Activated CD4-positive, alpha-beta memory T cell treated with anti-CD3 and anti-CD28 coated beads for 36 hours (primary cell): ENCODE measurements at regions of chr11 and their contacts with region 1.

Region 1: DNA sequence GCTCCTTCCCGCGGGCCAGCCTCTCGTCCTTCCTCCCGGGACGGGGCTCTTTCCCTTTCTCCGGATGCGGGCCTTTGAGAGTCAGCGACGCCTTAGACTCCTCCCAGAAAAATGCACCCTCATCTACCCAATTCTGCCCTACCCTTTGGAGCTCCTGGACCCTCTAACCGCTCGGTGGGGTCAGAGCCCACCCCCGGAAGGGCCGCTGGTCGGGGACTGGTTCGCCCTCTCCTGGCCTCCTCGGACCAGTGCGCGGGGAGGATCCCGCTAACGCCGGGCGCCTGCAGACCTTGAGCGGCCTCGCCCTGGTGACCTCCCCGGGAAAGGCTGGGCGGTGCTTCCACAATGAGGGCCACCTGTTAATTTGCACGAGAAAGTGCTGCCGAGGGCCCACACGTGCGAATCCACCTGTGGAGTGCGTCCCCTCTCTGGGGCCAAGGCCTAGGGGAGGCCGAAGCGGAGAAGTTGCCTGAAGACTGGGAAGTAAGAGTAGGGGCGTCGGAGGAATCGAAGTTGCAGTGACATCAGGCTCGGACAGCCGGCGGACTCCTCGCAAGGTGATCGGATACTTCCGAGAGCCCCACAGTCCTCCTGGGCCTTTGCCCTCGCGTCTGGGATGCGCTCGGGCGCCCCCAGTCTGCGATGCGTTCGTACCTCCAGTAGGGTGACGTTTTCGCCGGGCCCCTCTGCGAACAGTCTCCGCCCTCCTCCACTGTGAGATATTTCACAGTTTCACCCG is 61.5 kb downstream of the ENDOD1 start:
- DNase-seq: peak; percentile 95
- H3K4me3 Mint-ChIP-seq: peak overlapping the region; percentile 81
- H3K27ac Mint-ChIP-seq: peak overlapping the region; percentile 88
- H3K4me1 Mint-ChIP-seq: peaks cover 36% of the 10 kb centered on the region
- H3K27me3 Mint-ChIP-seq: no peaks in the 10 kb centered on the region

Region 2: DNA sequence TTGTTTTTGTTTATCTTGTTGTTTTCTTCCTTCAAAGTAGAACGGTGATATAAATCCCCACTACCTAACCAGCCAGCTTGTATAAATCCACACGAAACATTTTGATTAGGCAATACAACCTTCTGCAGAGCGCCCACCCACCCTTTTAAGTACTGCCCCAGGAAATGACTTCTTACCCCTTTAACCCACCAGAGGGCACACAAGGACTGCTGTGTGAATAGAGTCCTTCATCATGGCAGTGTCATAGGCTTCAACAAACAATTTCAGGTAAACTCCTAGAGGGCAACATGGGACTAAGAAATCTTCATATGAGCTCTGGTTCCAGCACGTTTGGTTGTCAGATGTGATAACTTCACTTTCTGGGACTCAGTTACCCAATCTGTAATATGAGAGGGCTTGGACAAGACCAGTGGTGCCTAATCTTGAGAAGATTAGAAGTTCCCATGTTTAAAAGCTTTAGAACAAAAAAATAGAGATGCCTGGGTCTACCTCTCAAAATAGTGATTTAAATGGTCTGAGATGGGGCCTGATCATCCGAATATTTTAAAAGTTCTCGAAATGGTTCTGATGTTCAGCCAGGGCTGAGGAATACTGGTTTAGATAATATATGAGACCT is 527.9 kb before region 1 on chr11:
- CTCF ChIA-PET with region 1: no interaction called
- POLR2A ChIA-PET with region 1: no interaction called
- intact Hi-C with region 1: loop called (anchors 1 kb)
- DNase-seq: peak; percentile 62
- H3K4me3 Mint-ChIP-seq: no peak overlapping the region
- H3K27ac Mint-ChIP-seq: no peak overlapping the region
- H3K4me1 Mint-ChIP-seq: no peaks in the 10 kb centered on the region
- H3K27me3 Mint-ChIP-seq: peaks cover 8% of the 10 kb centered on the region

Region 3: DNA sequence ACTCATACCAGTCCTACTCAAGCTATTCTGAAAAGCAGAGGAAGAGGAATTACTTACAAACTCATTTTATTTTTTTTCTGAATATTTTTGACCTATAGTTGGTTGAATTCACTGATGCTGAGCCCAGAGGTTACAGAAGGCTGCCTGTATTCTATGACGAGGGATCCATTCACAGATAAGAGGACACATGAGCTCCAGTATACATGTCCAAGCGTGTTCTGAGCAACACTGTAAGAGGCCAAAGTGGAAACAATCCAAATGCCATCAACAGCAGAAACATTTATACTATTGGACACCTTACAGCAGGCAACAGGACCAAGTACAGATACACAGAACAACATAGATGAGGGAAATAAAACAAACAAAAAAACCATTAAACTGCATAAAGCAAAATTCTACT is 115.8 kb before region 1 on chr11:
- CTCF ChIA-PET with region 1: no interaction called
- POLR2A ChIA-PET with region 1: no interaction called
- intact Hi-C with region 1: no loop called
- DNase-seq: no peak
- H3K4me3 Mint-ChIP-seq: no peak overlapping the region
- H3K27ac Mint-ChIP-seq: no peak overlapping the region
- H3K4me1 Mint-ChIP-seq: peaks cover 2% of the 10 kb centered on the region
- H3K27me3 Mint-ChIP-seq: peaks cover 6% of the 10 kb centered on the region

Region 4: DNA sequence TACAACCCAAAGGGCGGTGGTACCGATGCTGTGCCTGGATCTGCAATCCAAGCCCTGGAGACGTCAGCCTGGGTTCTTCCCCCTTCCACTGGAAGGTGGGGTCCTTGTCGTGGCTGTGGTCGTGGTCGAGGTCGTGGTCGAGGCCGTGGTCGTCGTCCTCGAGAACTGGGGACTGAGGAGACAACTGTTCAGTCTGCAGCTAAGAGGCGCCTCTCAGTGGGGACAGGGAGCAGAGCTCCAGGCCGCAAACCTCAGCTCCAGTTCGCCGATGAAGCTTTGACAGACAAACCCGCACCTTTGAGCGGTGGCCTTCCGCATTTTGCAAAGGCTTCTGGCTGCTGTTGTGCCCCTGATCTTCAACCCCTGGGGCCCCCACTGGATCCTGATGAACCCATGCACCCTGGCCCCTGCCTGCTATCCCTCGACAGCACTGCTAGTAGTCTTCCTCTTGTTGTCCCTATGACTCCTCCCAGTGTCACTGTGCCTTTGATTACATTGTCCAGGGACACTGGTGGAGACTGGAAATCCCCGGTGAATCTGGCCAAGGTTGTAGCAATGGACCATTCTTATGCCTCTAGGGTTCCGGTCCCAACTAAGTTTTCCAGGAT is 100.4 kb before region 1 on chr11:
- CTCF ChIA-PET with region 1: no interaction called
- POLR2A ChIA-PET with region 1: no interaction called
- intact Hi-C with region 1: no loop called
- DNase-seq: no peak
- H3K4me3 Mint-ChIP-seq: no peak overlapping the region
- H3K27ac Mint-ChIP-seq: no peak overlapping the region
- H3K4me1 Mint-ChIP-seq: no peaks in the 10 kb centered on the region
- H3K27me3 Mint-ChIP-seq: peaks cover 18% of the 10 kb centered on the region

Region 5: DNA sequence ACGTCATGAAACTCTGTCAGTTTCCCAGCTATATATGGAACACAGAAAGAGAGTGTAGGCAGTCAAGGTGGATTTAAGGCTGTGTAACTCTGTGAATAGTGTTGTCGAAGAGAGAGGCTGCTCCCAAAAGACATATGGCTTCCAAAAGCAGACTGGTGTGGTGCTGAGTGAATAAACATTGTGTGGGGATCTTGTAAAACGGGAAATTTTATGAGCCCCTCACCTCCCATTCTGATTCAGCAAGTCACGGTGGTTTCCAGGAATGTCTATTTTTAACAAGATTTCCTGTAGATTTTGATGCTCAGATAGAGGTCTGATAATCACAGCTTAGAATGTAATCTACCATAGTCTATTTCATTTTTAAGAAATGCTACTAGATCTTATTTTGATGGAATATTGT is 12.0 kb after region 1 on chr11:
- CTCF ChIA-PET with region 1: interaction called, 12 read pairs
- POLR2A ChIA-PET with region 1: no interaction called
- intact Hi-C with region 1: no loop called
- DNase-seq: no peak
- H3K4me3 Mint-ChIP-seq: no peak overlapping the region
- H3K27ac Mint-ChIP-seq: peak overlapping the region; percentile 73
- H3K4me1 Mint-ChIP-seq: peaks cover 27% of the 10 kb centered on the region
- H3K27me3 Mint-ChIP-seq: no peaks in the 10 kb centered on the region

Region 6: GRCh38 chr11:95337175-95337957 is 186.3 kb after region 1 on chr11:
- CTCF ChIA-PET with region 1: no interaction called
- POLR2A ChIA-PET with region 1: no interaction called
- intact Hi-C with region 1: loop called (anchors 5 kb)
- DNase-seq: peak; percentile 66
- H3K4me3 Mint-ChIP-seq: no peak overlapping the region
- H3K27ac Mint-ChIP-seq: no peak overlapping the region
- H3K4me1 Mint-ChIP-seq: peaks cover 3% of the 10 kb centered on the region
- H3K27me3 Mint-ChIP-seq: no peaks in the 10 kb centered on the region

Region 7: DNA sequence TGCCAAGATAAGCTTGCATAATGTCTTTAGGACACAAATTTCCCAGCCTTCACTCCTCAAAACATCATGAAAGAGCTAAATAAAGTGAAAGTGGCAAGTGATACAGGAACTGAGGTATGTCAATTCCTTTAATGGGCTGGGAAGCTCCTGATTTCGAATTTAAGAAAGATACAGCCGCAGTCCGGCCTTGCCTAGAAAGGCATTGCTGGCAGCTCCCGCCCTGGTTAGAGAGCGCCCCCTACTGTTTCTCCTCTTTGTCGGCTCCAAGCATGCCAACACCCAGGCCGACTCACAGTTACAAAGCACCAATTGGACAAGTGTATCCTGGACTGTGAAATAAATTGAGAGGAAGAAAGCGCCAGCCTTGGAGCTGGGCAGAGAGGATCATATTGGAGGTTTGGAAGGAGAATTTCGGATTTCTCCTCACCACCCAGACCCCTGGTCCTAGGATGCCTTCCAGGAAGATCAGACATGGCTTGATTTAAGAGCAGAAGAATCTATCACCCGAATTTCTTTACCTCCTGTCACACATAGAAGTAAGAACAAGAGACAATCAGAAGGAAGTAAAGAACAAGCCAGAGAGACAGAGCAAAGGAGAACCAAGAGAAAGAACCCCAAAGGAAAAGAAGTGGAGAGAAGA is 554.5 kb after region 1 on chr11:
- CTCF ChIA-PET with region 1: interaction called, 389 read pairs
- POLR2A ChIA-PET with region 1: interaction called, 3 read pairs
- intact Hi-C with region 1: loop called (anchors 1 kb)
- DNase-seq: peak; percentile 91
- H3K4me3 Mint-ChIP-seq: no peak overlapping the region
- H3K27ac Mint-ChIP-seq: no peak overlapping the region
- H3K4me1 Mint-ChIP-seq: peaks cover 13% of the 10 kb centered on the region
- H3K27me3 Mint-ChIP-seq: no peaks in the 10 kb centered on the region

Region 8: GRCh38 chr11:96012086-96012824 is 861.1 kb after region 1 on chr11:
- CTCF ChIA-PET with region 1: no interaction called
- POLR2A ChIA-PET with region 1: no interaction called
- intact Hi-C with region 1: loop called (anchors 5 kb)
- DNase-seq: peak; percentile 59
- H3K4me3 Mint-ChIP-seq: peak overlapping the region; percentile 32
- H3K27ac Mint-ChIP-seq: peak overlapping the region; percentile 75
- H3K4me1 Mint-ChIP-seq: peaks cover 55% of the 10 kb centered on the region
- H3K27me3 Mint-ChIP-seq: no peaks in the 10 kb centered on the region